Spleen (tissue), 13 donors: ENCODE measurements at regions of chrX and their contacts with region 1.

Region 1: GRCh38 chrX:17046478-17047097 is 100.1 kb downstream of the REPS2 start:
- DNase-seq: no peak
- H3K4me3 ChIP-seq: no peak overlapping the region
- H3K27ac ChIP-seq: no peak overlapping the region
- H3K4me1 ChIP-seq: no peaks in the 10 kb centered on the region
- H3K27me3 ChIP-seq: no peaks in the 10 kb centered on the region
- CTCF ChIP-seq: peak; percentile 18 to 69 (median 66)
- POLR2A ChIP-seq: no peak

Region 2: GRCh38 chrX:16826207-16826606 is 220.4 kb before region 1 on chrX:
- intact Hi-C with region 1: loop called (anchors 10 kb)
- DNase-seq: no peak
- H3K4me3 ChIP-seq: no peak overlapping the region
- H3K27ac ChIP-seq: no peak overlapping the region
- H3K4me1 ChIP-seq: no peaks in the 10 kb centered on the region
- H3K27me3 ChIP-seq: no peaks in the 10 kb centered on the region
- CTCF ChIP-seq: peak in 9 of 11 experiments; percentile 11 to 51 (median 43)
- POLR2A ChIP-seq: no peak

Region 3: DNA sequence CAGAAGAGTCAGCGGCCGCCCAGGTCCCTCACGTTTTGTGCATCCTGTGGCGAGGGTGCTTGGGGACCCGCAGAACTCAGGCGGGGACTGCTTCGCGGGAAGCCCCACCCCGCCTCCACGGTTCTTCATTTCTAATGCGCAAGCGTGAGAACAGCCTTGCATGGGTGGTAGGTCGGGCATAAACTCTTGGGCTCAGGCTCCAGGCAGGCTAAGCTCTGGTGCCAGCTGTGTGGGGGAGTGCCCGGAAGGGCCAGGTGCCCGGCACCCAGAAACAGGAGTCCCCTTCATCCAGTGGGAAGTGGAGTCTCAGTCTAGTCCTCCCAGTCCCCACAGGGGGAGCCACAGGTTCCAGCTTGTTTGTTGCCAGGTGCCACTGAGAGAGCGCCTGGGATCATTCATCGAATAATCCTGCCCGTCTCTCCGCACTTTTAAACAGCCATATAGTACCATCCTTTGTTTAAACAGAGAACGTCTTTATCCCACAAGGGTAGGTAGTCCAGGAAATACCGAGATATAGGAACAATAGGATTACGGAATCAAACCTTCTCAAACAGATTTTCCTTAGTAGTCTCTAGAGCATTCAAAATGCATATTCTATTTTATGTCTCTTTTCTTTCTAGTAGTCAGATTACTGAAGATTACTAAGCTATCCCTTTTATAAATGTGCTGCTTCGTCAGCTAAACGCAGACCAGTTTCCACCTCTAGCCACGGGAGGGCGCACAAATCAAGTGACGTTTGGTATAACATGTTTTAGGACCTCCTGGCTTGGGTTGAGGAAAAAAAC is 163.7 kb before region 1 on chrX:
- intact Hi-C with region 1: loop called (anchors 10 kb)
- DNase-seq: peak; percentile 87
- H3K4me3 ChIP-seq: peak overlapping the region; percentile 24 to 65 (median 36)
- H3K27ac ChIP-seq: peak overlapping the region; percentile 40 to 87 (median 80)
- H3K4me1 ChIP-seq: peaks cover 0 to 8% (median 2%) of the 10 kb centered on the region in 6 donors
- H3K27me3 ChIP-seq: peaks cover 0 to 34% (median 3%) of the 10 kb centered on the region in 7 donors
- CTCF ChIP-seq: peak in 10 of 11 experiments; percentile 32 to 68 (median 60)
- POLR2A ChIP-seq: no peak

Region 4: DNA sequence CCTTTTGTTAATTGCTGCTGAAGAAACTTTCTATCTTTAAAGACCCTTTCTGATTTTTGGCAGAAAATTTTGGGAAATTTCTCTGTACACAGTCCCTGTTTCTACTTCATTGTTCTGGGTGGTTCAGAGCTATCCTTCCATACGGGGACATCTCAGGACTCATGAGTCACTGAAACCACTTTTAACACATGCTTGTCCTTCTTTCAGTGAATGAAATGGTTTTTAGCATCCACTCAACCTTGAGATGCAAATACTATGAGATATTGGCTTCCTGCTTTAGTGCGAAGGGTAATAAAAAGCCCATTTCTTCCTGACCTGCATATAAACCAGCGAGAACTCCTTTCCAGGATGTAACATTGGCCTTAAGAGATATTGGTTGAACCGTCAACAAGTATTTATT is 57.8 kb after region 1 on chrX:
- intact Hi-C with region 1: no loop called
- DNase-seq: no peak
- H3K4me3 ChIP-seq: no peak overlapping the region
- H3K27ac ChIP-seq: no peak overlapping the region
- H3K4me1 ChIP-seq: no peaks in the 10 kb centered on the region
- H3K27me3 ChIP-seq: no peaks in the 10 kb centered on the region
- CTCF ChIP-seq: no peak
- POLR2A ChIP-seq: no peak

Region 5: GRCh38 chrX:17736856-17737706 is 690.5 kb after region 1 on chrX and contains the start of gene SCML1:
- intact Hi-C with region 1: no loop called
- DNase-seq: peak; percentile 95
- H3K4me3 ChIP-seq: peak within 1 kb of the TSS; percentile 37 to 76 (median 52)
- H3K27ac ChIP-seq: peak within 1 kb of the TSS; percentile 35 to 87 (median 86)
- H3K4me1 ChIP-seq: peaks cover 0 to 21% (median 2%) of the 10 kb centered on the region in 6 donors
- H3K27me3 ChIP-seq: peaks cover 0 to 18% (median 0%) of the 10 kb centered on the region in 7 donors
- CTCF ChIP-seq: no peak
- POLR2A ChIP-seq: no peak
- total RNA-seq, gene SCML1: 12.2 to 22.7 (median 15.8) TPM